A549 (cell line): ENCODE measurements at regions of chr1 and their contacts with region 1.

Region 1: GRCh38 chr1:37449936-37450335 is 24.4 kb upstream of the ZC3H12A start:
- DNase-seq: no peak
- ATAC-seq: no peak
- H3K4me3 ChIP-seq: no peak overlapping the region
- H3K27ac ChIP-seq: peak overlapping the region in 1 of 2 experiments; percentile 19; a peak in 1 of 6 replicates
- H3K4me1 ChIP-seq: peaks cover 33% of the 10 kb centered on the region
- CTCF ChIP-seq: no peak
- EP300 ChIP-seq: no peak
- POLR2A ChIP-seq: no peak
- RAD21 ChIP-seq: no peak

Region 2: DNA sequence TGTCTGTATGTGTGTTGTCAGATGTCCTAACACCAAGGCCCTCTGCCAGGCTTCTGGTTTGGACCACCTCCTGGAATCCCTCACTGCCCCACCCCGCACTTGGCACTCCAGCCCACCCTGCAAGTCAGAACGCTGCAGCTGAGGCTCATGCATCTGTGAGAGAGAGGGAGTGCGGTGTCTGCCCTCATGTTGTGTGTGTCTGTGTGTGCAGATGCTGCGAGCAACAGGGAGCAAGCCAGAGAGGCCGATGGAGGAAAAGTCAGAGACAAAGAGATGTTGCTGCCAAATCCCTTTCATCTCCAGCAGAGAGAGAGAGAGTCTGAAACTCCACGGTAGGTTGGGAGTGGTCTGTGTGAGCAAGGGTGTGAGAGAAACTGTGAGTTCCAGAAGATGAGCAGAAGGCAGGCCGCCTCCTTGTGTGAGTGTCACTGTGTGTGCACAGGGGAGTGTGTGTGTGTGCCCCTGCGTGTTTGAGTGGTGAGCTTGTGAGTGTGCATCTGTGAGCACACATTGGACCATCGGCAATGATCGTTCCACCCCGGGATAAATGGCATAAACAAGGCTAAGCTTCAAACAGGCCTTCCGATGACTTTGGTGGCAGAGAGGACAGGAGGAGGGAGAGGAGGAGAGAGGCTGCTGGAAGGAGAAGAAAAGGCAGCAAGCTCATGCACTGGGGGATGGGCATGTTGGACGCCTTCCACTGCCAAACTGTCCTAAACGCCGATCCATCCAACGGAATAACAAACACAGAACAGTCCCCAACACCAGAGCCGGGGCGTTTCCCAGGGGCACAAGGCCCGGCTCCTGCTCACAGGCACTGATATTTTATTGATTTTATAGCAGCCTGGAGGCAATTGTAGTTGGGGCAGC is 316.4 kb before region 1 on chr1:
- CTCF ChIA-PET with region 1: no interaction called
- POLR2A ChIA-PET with region 1: no interaction called
- DNase-seq: no peak
- ATAC-seq: no peak
- H3K4me3 ChIP-seq: no peak overlapping the region
- H3K27ac ChIP-seq: no peak overlapping the region
- H3K4me1 ChIP-seq: no peaks in the 10 kb centered on the region
- CTCF ChIP-seq: no peak
- EP300 ChIP-seq: no peak
- POLR2A ChIP-seq: no peak
- RAD21 ChIP-seq: no peak

Region 3: DNA sequence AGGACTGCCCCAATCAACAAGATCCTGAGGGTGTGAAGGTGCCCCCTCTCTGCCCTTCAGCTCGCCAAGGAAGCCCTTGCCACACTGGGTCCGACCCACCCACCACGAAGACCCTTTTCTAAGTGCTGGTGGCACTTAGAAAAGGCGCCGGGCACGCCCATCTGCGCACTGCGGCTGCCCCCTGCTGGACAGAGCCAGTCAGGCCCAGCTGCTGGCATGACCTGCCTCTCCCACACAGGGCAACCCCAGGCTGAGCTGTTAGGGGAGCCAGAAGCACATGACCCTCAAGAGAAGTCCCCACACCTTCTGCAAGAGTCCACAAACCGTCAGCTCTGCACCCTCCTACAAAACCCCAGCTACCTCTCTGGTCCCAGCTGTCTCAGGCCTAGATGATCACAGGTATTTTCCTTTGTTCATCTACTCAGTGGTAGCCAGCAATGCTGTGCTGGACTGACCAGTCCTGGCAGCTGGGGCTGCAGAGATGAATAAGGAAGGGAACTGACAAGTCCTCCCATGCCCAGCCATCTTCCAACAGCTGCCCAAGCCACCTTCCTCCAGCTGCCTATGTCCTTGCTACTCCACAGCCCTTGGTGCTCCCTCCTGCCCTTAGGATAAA is 15.5 kb before region 1 on chr1:
- CTCF ChIA-PET with region 1: interaction called, 13 read pairs
- POLR2A ChIA-PET with region 1: no interaction called
- DNase-seq: peak; percentile 50 to 77
- ATAC-seq: peak; percentile 77 to 95
- H3K4me3 ChIP-seq: no peak overlapping the region
- H3K27ac ChIP-seq: no peak overlapping the region; a peak in 1 of 6 replicates
- H3K4me1 ChIP-seq: no peaks in the 10 kb centered on the region
- CTCF ChIP-seq: peak; percentile 64
- EP300 ChIP-seq: no peak
- POLR2A ChIP-seq: no peak
- RAD21 ChIP-seq: peak; percentile 79 to 84

Region 4: DNA sequence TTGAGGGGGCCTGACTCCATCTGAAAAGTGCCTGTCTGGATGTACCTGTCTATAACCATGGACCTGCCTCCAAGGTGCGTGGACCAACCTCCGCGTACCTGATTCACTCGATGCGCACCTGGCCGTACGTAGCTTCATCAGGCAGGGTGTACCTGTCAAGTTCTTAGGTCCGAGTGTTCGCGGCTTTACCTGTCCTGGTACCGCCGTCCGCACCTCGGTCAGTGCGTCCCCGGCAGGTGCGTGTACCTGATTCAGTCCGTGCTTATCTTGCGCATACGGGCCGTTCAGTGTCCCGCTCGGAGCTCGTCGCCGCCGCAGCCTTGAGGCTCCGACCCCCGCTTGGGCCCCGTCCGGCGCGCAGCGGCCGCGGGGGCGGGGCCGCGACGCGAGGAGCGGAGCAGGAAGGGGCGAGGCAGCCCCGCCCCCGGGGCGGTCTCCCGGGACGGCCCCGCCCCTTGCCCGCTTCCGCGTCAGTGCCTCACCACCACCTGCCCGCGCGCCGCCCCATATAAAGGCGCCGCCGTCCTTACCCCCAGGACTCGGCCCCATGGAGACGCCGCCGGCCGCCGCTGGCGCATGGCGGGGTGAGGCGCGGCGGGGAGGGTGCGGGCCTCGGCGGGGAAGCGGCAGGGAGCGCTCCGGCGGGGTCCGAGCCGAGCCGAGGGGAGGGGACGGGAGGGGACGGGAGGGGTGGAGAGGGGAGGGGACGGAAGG is 24.3 kb after region 1 on chr1 and contains the start of gene ZC3H12A:
- CTCF ChIA-PET with region 1: interaction called, 209 read pairs
- POLR2A ChIA-PET with region 1: interaction called, 5 read pairs
- DNase-seq: peak; percentile 58 to 83
- ATAC-seq: peak; percentile 41 to 44
- H3K4me3 ChIP-seq: peak within 1 kb of the TSS; percentile 85
- H3K27ac ChIP-seq: peak within 1 kb of the TSS; percentile 88 to 100
- H3K4me1 ChIP-seq: peaks cover 47% of the 10 kb centered on the region
- CTCF ChIP-seq: no peak; the same call in 2 of the 3 replicates
- EP300 ChIP-seq: no peak
- POLR2A ChIP-seq: peak; percentile 91
- RAD21 ChIP-seq: no peak
- polyA plus RNA-seq, gene ZC3H12A: 23.1 and 23.5 TPM in 2 replicates

Region 5: DNA sequence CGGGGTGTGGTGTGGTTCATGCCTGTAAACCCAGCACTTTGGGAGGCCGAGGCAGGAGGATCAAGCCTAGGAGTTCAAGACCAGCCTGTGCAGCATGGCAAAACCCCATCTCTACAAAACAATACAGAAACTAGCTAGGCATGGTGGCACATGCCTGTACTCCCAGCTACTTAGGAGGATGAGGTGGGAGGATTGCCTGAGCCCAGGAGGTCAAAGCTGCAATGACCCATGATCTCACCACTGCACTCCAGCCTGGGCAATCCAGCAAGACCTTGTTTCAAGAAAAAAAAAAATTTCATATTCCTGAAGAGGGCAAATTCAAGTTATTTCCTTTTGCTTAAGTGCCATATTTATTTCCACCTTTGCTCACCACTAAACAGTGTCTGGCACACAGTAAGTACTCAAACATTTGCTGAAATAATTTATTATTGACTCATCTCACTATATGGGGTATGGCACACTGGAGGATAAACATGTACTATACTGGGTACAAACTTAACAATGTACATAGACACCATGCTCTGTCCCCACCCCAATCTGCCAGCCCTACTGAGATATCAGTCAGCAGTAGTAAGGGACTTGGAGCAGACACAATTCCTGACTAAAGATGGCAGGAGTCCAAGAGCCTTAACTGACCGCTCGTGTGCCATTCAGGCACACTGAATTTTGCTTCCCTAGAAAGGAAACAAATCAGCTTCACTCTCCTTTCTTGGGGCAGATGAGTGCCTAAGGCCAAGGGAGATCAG is 49.1 kb after region 1 on chr1:
- CTCF ChIA-PET with region 1: interaction called, 11 read pairs
- POLR2A ChIA-PET with region 1: no interaction called
- DNase-seq: peak in 1 of 2 experiments; percentile 66
- ATAC-seq: peak; percentile 59 to 93
- H3K4me3 ChIP-seq: no peak overlapping the region
- H3K27ac ChIP-seq: peak overlapping the region; percentile 68 to 80; a peak in 5 of 6 replicates
- H3K4me1 ChIP-seq: peaks cover 52% of the 10 kb centered on the region
- CTCF ChIP-seq: no peak
- EP300 ChIP-seq: no peak
- POLR2A ChIP-seq: no peak
- RAD21 ChIP-seq: no peak

Region 6: DNA sequence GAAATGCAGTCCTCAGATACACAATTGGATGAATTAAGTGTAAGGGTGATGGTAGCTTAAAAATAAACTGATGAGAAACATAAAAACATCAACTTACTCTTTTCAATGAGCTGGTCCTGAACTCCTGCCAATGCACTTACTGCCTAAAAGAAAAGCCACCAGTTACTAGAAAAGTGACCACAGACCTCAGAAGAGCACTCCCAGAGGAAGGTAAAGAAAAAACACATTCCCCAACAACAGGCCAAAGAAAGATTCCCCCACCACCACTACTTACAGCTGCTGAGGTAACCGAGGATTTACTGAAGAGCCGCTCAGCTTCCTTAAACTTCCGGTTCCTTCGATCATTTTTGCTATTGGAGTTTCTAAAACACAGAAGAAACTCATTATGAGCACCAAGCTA is 59.2 kb after region 1 on chr1:
- CTCF ChIA-PET with region 1: interaction called, 10 read pairs
- POLR2A ChIA-PET with region 1: interaction called, 3 read pairs
- DNase-seq: peak in 1 of 2 experiments; percentile 30
- ATAC-seq: peak; percentile 74 to 86; a peak in 4 of 6 replicates
- H3K4me3 ChIP-seq: no peak overlapping the region
- H3K27ac ChIP-seq: no peak overlapping the region
- H3K4me1 ChIP-seq: peaks cover 6% of the 10 kb centered on the region; the same call in 1 of the 3 replicates
- CTCF ChIP-seq: peak; percentile 20; the same call in 1 of the 3 replicates
- EP300 ChIP-seq: no peak
- POLR2A ChIP-seq: no peak
- RAD21 ChIP-seq: no peak

Region 7: GRCh38 chr1:37588939-37589338 is 139.0 kb after region 1 on chr1:
- CTCF ChIA-PET with region 1: no interaction called
- POLR2A ChIA-PET with region 1: no interaction called
- DNase-seq: no peak
- ATAC-seq: no peak
- H3K4me3 ChIP-seq: no peak overlapping the region
- H3K27ac ChIP-seq: no peak overlapping the region
- H3K4me1 ChIP-seq: peaks cover 3% of the 10 kb centered on the region; the same call in 2 of the 3 replicates
- CTCF ChIP-seq: no peak
- EP300 ChIP-seq: no peak
- POLR2A ChIP-seq: no peak
- RAD21 ChIP-seq: no peak

Region 8: DNA sequence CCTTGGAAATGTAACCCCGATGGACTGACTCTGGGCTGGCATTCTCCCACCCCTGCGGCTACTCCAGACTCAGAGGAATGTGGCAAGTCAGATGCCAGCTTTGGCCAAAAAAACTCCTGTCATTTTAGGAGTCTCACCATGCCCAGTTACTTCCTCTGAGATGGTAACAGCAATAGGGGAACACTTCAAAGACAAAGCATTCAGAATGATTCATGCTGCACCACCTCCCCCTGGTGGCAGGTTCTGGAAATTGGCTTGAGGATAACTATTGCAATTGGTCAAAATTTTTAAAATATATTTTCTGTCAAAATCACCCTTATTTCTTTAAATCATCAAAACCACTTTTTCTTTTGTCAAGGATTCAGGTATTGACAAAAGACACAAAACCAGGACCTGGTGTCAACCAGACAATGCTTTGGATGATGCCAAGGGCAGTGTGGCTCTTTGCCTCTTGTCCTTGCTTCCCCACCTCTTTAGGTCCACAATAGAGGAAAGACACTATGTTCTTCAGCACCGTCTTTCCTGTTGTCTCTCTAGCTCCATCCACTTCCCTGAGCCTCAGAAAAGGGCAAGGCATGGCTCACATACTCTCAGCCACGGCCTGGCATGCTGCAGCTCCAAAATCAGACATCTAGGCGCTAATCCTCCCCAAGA is 232.5 kb after region 1 on chr1:
- CTCF ChIA-PET with region 1: interaction called, 25 read pairs
- POLR2A ChIA-PET with region 1: no interaction called
- DNase-seq: peak; percentile 40 to 44
- ATAC-seq: peak; percentile 59 to 87; a peak in 5 of 6 replicates
- H3K4me3 ChIP-seq: no peak overlapping the region
- H3K27ac ChIP-seq: no peak overlapping the region
- H3K4me1 ChIP-seq: no peaks in the 10 kb centered on the region
- CTCF ChIP-seq: peak; percentile 76
- EP300 ChIP-seq: no peak
- POLR2A ChIP-seq: no peak
- RAD21 ChIP-seq: peak; percentile 75 to 79